B cell (primary cell): ENCODE measurements at regions of chr6 and their contacts with region 1.

Region 1: DNA sequence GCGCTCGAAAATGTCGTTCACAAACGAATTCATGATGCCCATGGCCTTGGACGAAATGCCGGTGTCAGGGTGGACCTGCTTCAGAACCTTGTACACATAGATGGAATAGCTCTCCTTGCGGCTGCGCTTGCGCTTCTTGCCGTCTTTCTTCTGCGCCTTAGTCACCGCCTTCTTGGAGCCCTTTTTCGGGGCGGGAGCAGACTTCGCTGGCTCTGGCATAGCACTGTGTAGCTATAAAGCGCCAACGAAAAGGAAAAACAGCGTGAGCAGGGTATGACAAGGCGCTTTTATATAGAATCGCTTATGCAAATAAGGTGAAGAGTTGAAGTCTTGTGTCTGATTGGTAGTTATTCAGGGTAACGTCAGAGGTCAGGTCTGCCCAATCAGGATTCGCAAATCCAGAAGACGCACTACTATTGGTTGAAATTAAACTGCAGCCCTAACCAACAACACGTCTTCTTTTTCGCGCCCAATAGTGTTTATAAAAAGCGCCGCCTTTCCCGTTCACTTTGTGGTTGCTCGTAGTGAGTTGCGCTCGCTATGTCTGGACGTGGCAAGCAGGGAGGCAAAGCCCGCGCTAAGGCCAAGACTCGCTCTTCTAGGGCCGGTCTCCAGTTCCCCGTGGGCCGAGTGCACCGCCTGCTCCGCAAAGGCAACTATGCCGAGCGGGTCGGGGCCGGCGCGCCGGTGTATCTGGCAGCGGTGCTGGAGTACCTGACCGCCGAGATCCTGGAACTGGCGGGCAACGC is 114.8 kb upstream of the PRSS16 start:
- DNase-seq: no peak
- ATAC-seq: peak; percentile 84
- H3K4me3 ChIP-seq: peak overlapping the region; percentile 70 to 81 (median 74)
- H3K4me3 Mint-ChIP-seq: no peak overlapping the region
- H3K27ac ChIP-seq: peak overlapping the region; percentile 83
- H3K27ac Mint-ChIP-seq: no peak overlapping the region
- H3K4me1 ChIP-seq: peaks cover 14 to 24% of the 10 kb centered on the region in 2 donors
- H3K4me1 Mint-ChIP-seq: peaks cover 23% of the 10 kb centered on the region
- H3K27me3 ChIP-seq: no peaks in the 10 kb centered on the region
- H3K27me3 Mint-ChIP-seq: no peaks in the 10 kb centered on the region
- CTCF ChIP-seq: no peak

Region 2: DNA sequence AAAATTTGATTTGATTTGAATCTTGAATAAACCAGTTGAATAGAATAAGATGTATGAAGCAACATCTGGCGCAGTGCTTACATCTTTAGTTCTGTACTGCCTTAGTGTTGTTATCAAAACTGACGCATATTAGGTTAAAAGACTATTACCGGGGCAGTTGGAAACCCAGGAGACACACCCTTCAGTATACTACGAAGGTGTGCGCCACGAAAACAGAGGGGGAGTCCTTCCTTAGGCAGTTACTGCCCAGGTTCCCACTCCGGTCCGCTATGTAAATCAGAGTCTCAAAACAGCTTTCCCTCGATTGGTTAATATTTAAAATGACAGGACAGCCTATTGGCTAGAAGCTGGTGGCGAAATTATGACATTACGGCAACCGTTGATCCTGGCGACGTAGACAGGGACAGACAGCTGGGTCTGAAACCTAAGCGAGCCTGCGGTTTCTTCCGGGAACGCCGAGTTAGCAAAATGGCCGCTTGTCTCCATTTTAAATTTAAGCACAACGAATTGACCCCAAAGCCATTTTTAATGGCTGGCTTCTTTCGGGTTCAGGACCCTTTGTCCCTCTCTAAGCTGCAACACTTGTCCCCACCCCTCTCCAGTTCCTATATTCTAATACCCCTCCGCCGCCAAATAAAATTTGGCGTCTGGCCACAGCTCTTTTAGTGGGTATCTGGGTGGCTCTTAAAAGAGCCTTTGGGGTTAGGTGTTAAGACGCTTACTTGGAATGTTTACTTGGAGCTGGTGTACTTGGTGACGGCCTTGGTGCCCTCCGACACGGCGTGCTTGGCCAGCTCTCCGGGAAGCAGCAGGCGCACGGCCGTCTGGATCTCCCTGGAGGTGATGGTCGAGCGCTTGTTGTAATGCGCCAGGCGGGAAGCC is 1009.7 kb before region 1 on chr6:
- CTCF ChIA-PET with region 1: interaction called, 3 read pairs
- POLR2A ChIA-PET with region 1: interaction called, 21 read pairs
- intact Hi-C with region 1: loop called (anchors 1 kb)
- DNase-seq: peak; percentile 97
- ATAC-seq: peak; percentile 59
- H3K4me3 ChIP-seq: peak overlapping the region; percentile 87 to 100 (median 96)
- H3K4me3 Mint-ChIP-seq: peak overlapping the region; percentile 93
- H3K27ac ChIP-seq: peak overlapping the region; percentile 87 to 88
- H3K27ac Mint-ChIP-seq: peak overlapping the region; percentile 97
- H3K4me1 ChIP-seq: peaks cover 19 to 23% of the 10 kb centered on the region in 2 donors
- H3K4me1 Mint-ChIP-seq: peaks cover 26% of the 10 kb centered on the region
- H3K27me3 ChIP-seq: no peaks in the 10 kb centered on the region
- H3K27me3 Mint-ChIP-seq: no peaks in the 10 kb centered on the region
- CTCF ChIP-seq: no peak

Region 3: GRCh38 chr6:26285143-26286134 is 847.3 kb before region 1 on chr6:
- CTCF ChIA-PET with region 1: no interaction called
- POLR2A ChIA-PET with region 1: interaction called, 5 read pairs
- intact Hi-C with region 1: loop called (anchors 1 kb)
- DNase-seq: peak; percentile 99
- ATAC-seq: peak; percentile 76
- H3K4me3 ChIP-seq: peak overlapping the region; percentile 52 to 99 (median 71)
- H3K4me3 Mint-ChIP-seq: peak overlapping the region; percentile 90
- H3K27ac ChIP-seq: peak overlapping the region; percentile 93 to 97
- H3K27ac Mint-ChIP-seq: peak overlapping the region; percentile 95
- H3K4me1 ChIP-seq: peaks cover 17 to 18% of the 10 kb centered on the region in 2 donors
- H3K4me1 Mint-ChIP-seq: peaks cover 33% of the 10 kb centered on the region
- H3K27me3 ChIP-seq: no peaks in the 10 kb centered on the region
- H3K27me3 Mint-ChIP-seq: peaks cover 3% of the 10 kb centered on the region
- CTCF ChIP-seq: no peak

Region 4: GRCh38 chr6:27157459-27158315 is 25.0 kb after region 1 on chr6:
- CTCF ChIA-PET with region 1: interaction called, 56 read pairs
- POLR2A ChIA-PET with region 1: interaction called, 4 read pairs
- intact Hi-C with region 1: loop called (anchors 1 kb)
- DNase-seq: peak; percentile 91
- ATAC-seq: peak; percentile 77
- H3K4me3 ChIP-seq: peak overlapping the region; percentile 59 to 91 (median 72)
- H3K4me3 Mint-ChIP-seq: peak overlapping the region; percentile 94
- H3K27ac ChIP-seq: peak overlapping the region; percentile 18 to 45
- H3K27ac Mint-ChIP-seq: peak overlapping the region; percentile 85
- H3K4me1 ChIP-seq: peaks cover 17 to 20% of the 10 kb centered on the region in 2 donors
- H3K4me1 Mint-ChIP-seq: peaks cover 25% of the 10 kb centered on the region
- H3K27me3 ChIP-seq: no peaks in the 10 kb centered on the region
- H3K27me3 Mint-ChIP-seq: no peaks in the 10 kb centered on the region
- CTCF ChIP-seq: peak; percentile 64

Region 5: GRCh38 chr6:27260369-27260768 is 127.7 kb after region 1 on chr6:
- CTCF ChIA-PET with region 1: no interaction called
- POLR2A ChIA-PET with region 1: no interaction called
- intact Hi-C with region 1: no loop called
- DNase-seq: no peak
- ATAC-seq: no peak
- H3K4me3 ChIP-seq: no peak overlapping the region
- H3K4me3 Mint-ChIP-seq: no peak overlapping the region
- H3K27ac ChIP-seq: no peak overlapping the region
- H3K27ac Mint-ChIP-seq: no peak overlapping the region
- H3K4me1 ChIP-seq: no peaks in the 10 kb centered on the region
- H3K4me1 Mint-ChIP-seq: no peaks in the 10 kb centered on the region
- H3K27me3 ChIP-seq: peaks cover 0 to 38% (median 29%) of the 10 kb centered on the region in 4 experiments
- H3K27me3 Mint-ChIP-seq: peaks cover 67% of the 10 kb centered on the region
- CTCF ChIP-seq: no peak

Region 6: GRCh38 chr6:27838058-27838944 is 705.6 kb after region 1 on chr6:
- CTCF ChIA-PET with region 1: no interaction called
- POLR2A ChIA-PET with region 1: interaction called, 26 read pairs
- intact Hi-C with region 1: loop called (anchors 2 kb)
- DNase-seq: peak; percentile 98
- ATAC-seq: peak; percentile 80
- H3K4me3 ChIP-seq: peak overlapping the region; percentile 82 to 99 (median 90)
- H3K4me3 Mint-ChIP-seq: no peak overlapping the region
- H3K27ac ChIP-seq: peak overlapping the region; percentile 94 to 96
- H3K27ac Mint-ChIP-seq: no peak overlapping the region
- H3K4me1 ChIP-seq: peaks cover 28 to 29% of the 10 kb centered on the region in 2 donors
- H3K4me1 Mint-ChIP-seq: peaks cover 18% of the 10 kb centered on the region
- H3K27me3 ChIP-seq: peaks cover 0 to 4% (median 0%) of the 10 kb centered on the region in 4 experiments
- H3K27me3 Mint-ChIP-seq: no peaks in the 10 kb centered on the region
- CTCF ChIP-seq: no peak